Mammary epithelial cell (primary cell): ENCODE measurements at regions of chr6 and their contacts with region 1.

Region 1: DNA sequence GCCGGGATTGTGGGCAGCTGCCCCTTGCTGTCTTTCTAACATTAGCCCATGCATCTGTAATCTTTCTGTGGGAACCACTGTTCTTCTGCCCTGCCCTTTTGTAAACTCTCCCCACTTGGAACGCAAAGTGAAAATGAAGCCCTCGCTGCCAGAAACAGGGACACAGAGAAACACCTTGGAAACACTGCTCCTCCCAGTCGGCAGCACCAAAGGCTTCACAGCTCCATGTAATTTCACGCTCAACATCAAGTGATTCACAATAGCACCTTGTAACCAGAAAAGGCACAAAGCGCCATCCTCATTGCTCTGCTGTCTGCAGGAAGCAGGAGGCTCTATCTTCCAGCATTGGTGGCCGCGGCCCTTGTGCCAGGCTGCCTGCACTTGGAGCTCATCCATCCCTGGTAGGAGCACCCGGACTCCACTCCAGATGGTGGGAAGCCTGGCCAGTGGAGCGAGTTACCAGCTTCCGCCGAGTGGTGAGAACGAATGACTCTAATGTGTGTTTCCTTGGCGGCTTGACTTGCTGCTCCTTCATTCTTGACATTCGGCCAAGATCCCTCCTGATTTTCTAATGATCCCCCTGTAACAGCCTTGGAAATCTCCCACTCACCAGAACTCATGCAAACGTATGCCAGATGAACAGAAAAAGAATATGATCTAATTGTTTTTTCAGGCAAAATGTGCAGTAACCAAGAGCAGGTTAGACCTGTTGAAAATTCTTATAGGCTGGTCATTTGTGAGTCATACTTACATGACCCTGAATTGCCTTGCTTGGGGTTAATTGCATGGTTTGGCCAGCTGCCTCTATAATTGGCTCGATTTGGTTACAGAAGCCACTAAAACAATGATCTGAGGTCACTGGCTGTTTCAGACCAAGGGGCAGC is 169.1 kb upstream of the CDYL start:
- DNase-seq: peak; percentile 82
- H3K4me3 ChIP-seq: peak overlapping the region in 2 of 3 experiments; percentile 19 to 20
- H3K27ac ChIP-seq: peak overlapping the region; percentile 68
- H3K4me1 ChIP-seq: peaks cover 45% of the 10 kb centered on the region
- H3K27me3 ChIP-seq: no peaks in the 10 kb centered on the region
- CTCF ChIP-seq: no peak

Region 2: DNA sequence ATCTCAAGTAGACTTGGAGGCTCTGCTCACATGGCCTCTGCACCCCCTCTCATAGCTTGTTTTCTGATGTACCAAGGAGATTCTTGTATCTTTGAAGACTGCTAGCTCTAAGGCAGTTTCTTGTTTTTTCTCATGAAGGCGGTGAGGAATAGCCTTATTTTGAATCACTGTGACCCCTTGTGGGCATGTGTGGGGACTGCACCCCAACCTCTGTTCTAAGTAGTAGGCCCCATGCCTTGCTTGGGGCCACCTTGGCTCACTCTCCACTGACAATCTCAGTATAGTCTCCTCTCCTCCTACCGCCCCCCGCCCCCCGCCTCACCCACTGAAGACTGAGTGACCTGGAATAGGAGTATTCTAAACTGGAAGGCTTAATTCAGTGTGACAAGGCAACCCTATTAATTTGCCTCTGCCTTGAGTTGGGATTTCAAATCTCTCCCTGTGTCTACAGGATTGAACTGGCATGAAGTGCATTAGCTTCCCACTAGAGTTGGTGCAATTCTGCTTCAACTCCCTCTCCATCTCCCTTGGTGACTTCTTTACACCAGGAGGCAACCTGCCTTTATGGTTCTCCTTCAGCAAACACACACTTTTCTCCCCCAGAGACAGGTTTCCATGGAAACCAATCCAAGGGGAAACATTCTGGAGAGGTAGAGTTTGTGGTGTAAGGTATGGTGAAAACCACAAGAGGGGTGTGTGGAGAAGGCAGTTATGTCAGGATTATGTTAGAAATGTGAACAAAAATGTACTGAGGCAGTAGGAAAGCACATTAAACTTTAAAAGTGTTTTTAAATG is 396.2 kb before region 1 on chr6:
- CTCF ChIA-PET with region 1: no interaction called
- dilution Hi-C with region 1: no loop called
- in situ Hi-C with region 1: no loop called
- intact Hi-C with region 1: no loop called
- DNase-seq: peak; percentile 30
- H3K4me3 ChIP-seq: no peak overlapping the region
- H3K27ac ChIP-seq: no peak overlapping the region
- H3K4me1 ChIP-seq: peaks cover 6% of the 10 kb centered on the region
- H3K27me3 ChIP-seq: no peaks in the 10 kb centered on the region
- CTCF ChIP-seq: peak; percentile 72 to 84

Region 3: DNA sequence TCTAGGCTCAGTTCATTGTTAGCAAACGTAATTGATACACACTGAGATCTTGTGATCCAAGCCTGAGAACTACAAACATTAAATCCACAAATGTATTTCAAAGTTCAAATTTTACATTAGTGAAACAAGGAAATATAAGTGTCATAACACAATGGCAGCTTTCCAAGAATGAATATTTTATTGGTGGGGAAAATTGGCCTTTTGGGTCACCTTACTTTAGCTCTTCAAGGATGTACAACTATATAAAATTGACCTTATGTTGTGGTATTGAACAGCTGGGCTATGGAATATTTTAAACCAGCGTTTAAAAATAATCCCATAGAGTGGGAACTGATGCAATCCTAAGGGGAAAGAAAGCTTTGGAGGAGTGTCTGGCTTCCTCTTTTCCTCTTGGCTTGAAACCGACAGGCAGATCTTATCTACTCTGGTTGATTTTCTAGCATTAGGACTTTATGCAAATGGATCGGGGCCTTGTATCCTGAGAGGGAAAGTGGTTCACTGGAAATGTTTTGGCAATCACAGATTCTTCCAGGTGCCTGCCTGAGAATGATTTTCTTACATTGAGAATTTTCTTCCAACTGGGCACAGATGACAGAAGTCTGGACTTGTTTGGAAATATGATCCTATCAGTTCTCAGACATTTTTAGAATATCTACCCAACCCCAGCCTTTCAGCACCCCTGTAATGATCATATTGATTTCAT is 286.9 kb before region 1 on chr6:
- CTCF ChIA-PET with region 1: no interaction called
- dilution Hi-C with region 1: no loop called
- in situ Hi-C with region 1: loop called in 1 of 2 experiments (anchors 5 kb)
- intact Hi-C with region 1: loop called (anchors 1 kb)
- DNase-seq: peak; percentile 70
- H3K4me3 ChIP-seq: peak overlapping the region in 1 of 3 experiments; percentile 2
- H3K27ac ChIP-seq: peak overlapping the region; percentile 93
- H3K4me1 ChIP-seq: peaks cover 55% of the 10 kb centered on the region
- H3K27me3 ChIP-seq: no peaks in the 10 kb centered on the region
- CTCF ChIP-seq: no peak

Region 4: DNA sequence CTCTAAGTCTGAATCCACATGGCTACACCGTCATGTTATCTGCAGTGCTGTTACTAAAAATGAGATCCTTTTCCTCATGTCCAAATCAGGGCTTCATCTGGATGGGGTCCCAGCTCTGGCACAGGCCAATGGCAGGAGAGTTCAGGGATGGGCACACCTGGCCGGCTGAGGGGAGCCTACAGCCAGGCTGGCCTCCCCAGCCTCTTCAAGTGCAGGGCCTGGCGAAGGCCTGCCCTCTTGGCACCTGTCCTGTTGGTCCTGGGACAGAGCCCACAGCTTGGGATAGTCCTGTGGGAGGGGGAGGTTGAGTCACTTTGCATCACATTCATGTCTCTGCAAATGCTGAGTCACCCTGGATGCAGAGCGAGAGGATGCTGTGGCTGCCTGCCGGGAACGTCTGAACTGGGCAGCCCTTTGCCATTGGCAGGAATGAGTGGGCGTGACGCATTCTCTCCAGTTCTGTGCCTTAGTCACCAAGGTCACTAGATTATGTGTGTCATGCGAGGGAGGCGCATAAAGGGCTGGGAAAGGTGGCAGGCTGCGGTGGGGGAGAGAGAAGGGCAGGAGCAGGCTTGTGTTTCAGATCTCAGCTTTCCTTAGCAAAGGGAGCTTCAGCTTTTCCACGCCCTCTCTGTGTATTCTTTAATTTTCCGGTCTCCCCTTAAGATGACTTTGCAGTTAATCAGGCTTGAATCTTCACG is 248.5 kb before region 1 on chr6:
- CTCF ChIA-PET with region 1: no interaction called
- dilution Hi-C with region 1: no loop called
- in situ Hi-C with region 1: no loop called
- intact Hi-C with region 1: loop called (anchors 10 kb)
- DNase-seq: peak; percentile 100
- H3K4me3 ChIP-seq: peak overlapping the region in 1 of 3 experiments; percentile 6
- H3K27ac ChIP-seq: peak overlapping the region; percentile 92
- H3K4me1 ChIP-seq: peaks cover 39% of the 10 kb centered on the region
- H3K27me3 ChIP-seq: no peaks in the 10 kb centered on the region
- CTCF ChIP-seq: no peak

Region 5: GRCh38 chr6:4426890-4427486 is 180.1 kb before region 1 on chr6:
- CTCF ChIA-PET with region 1: no interaction called
- dilution Hi-C with region 1: no loop called
- in situ Hi-C with region 1: no loop called
- intact Hi-C with region 1: loop called (anchors 2 kb)
- DNase-seq: no peak
- H3K4me3 ChIP-seq: no peak overlapping the region
- H3K27ac ChIP-seq: no peak overlapping the region
- H3K4me1 ChIP-seq: no peaks in the 10 kb centered on the region
- H3K27me3 ChIP-seq: no peaks in the 10 kb centered on the region
- CTCF ChIP-seq: no peak

Region 6: DNA sequence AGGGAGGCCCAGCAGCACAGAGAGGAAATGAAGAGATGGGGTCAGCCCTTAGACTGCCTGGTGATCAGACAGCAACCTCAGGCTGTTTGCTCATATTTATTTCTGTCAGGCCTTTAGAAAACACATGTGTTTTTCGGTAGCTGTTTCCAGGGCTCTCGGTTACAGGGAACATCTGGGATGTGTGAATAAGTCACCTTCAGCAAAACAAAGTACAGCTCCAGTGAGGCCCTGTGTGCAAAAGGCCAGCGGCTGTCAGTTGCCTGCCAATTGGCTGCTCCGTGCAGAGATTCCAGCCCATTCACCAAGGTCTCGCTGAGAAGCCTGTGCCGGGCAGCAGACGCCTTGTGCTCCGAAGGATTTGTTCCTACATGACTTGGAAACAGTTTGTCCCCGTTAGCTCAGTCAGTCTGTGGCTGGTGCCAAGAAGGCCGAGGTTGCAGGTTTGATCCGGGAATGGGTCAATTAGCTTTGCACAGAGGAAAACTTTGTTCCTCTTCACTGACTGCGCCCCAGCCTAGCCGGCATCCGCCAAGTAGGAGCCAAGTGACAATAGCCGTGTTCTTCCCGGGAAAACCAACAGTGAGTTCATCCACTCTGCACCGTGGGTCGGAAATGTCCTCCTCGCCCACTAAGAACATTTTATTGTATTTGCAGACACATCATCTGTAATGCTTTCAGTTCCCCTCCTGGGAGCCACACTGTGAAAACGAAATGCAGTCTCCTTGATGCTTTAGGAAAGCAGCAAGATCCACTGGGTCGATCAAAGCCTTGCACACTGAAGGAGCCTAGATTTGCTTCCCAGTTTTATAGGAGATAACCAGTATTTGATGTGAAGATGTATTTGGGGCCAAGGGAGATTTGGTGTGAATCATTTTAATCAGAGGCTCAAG is 146.2 kb before region 1 on chr6:
- CTCF ChIA-PET with region 1: no interaction called
- dilution Hi-C with region 1: no loop called
- in situ Hi-C with region 1: no loop called
- intact Hi-C with region 1: loop called (anchors 10 kb)
- DNase-seq: no peak
- H3K4me3 ChIP-seq: no peak overlapping the region
- H3K27ac ChIP-seq: no peak overlapping the region
- H3K4me1 ChIP-seq: peaks cover 26% of the 10 kb centered on the region
- H3K27me3 ChIP-seq: no peaks in the 10 kb centered on the region
- CTCF ChIP-seq: no peak

Region 7: DNA sequence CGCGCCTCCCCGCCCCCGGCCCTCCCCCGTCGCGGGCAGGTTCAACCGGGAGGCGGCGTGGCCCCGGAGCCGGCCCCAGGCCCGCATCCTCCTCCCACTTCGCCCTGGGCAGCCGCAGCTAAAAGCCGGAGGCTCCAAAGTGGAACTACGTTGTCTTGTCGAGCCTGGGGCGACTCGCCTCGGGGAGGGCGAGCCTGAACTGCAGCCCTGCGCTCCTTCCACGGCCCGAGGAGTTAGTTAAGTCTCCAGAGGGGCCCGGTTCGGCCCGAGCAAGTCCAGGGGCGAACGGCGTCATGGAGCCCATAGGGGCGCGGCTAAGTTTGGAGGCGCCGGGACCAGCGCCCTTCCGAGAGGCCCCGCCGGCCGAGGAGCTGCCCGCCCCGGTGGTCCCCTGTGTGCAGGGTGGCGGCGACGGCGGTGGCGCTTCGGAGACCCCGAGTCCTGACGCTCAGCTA is 478.2 kb after region 1 on chr6 and contains the start of gene PPP1R3G:
- CTCF ChIA-PET with region 1: no interaction called
- dilution Hi-C with region 1: no loop called
- in situ Hi-C with region 1: no loop called
- intact Hi-C with region 1: no loop called
- DNase-seq: peak; percentile 26
- H3K4me3 ChIP-seq: peak within 1 kb of the TSS; percentile 41 to 55 (median 53)
- H3K27ac ChIP-seq: no peak within 1 kb of the TSS
- H3K4me1 ChIP-seq: peaks cover 39% of the 10 kb centered on the region
- H3K27me3 ChIP-seq: peaks cover 8% of the 10 kb centered on the region
- CTCF ChIP-seq: no peak
- total RNA-seq, gene PPP1R3G: 0.67 TPM in 1 of 2 donors, not detected in the other